Activated naive CD4-positive, alpha-beta T cell treated with anti-CD3 and anti-CD28 coated beads, Interleukin-2, amount 10 ng/mL, durations not matched to agents 7 days and 5 days (primary cell): ENCODE measurements at regions of chr15 and their contacts with region 1.

Region 1: GRCh38 chr15:59751552-59752413 is 62.7 kb upstream of the BNIP2 start:
- DNase-seq: no peak
- H3K4me3 Mint-ChIP-seq: no peak overlapping the region
- H3K27ac Mint-ChIP-seq: no peak overlapping the region
- H3K4me1 Mint-ChIP-seq: peaks cover 16% of the 10 kb centered on the region
- H3K27me3 Mint-ChIP-seq: peaks cover 24% of the 10 kb centered on the region

Region 2: GRCh38 chr15:60179786-60180391 is 428.1 kb after region 1 on chr15:
- CTCF ChIA-PET with region 1: interaction called, 10 read pairs
- DNase-seq: peak; percentile 54
- H3K4me3 Mint-ChIP-seq: no peak overlapping the region
- H3K27ac Mint-ChIP-seq: no peak overlapping the region
- H3K4me1 Mint-ChIP-seq: no peaks in the 10 kb centered on the region
- H3K27me3 Mint-ChIP-seq: peaks cover 29% of the 10 kb centered on the region